CD8-positive, alpha-beta T cell (primary cell): ENCODE measurements at regions of chr9 and their contacts with region 1.

Region 1: DNA sequence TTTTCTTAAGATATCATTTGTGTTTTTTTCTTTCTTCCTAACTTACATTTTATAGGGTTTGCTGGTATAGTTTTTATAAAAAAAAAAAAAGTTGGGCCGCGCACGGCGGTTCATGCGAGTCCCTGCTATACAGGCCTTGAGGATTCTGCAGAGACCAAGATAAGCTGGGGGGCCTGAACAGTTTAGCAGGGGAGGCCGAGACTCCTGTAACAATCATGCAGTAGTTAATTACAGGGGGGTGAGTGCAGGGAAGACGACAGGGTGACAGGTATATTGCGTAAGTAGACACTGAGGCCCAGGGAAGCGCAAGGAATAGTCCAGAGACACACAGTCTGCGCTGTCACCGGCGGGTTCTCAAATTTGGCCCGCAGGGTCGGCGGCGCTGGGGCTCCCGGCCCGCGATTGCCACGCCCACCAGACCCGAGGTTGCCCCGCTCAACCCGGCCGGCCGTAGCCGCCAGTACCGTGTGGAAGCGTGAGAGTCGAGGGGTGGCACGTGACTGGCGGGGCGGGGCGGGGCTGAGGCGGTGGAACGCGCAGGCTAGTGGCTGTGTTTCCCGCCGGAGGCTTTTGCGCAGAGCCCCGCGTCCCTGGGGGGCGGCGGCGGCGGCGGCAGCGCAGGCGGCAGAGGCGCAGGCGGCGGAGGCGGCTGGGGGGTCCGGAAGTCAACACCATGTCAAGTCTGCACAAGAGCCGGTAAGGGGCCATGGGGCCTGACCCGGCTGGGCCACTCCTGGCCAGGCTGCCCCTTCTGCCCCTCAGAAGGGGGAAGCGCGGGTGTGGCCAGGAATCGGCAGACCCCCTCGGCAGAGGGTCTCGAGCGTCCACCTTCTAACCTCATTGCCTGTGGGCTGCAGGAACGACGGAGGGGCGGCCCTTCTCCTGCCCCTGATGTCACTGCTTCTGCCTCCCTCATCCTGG is at the start of gene TBC1D13:
- DNase-seq: peak; percentile 86 to 95 (median 89)
- ATAC-seq: peak; percentile 90
- H3K4me3 ChIP-seq: peak within 1 kb of the TSS; percentile 96 to 98
- H3K4me3 Mint-ChIP-seq: peak within 1 kb of the TSS; percentile 94
- H3K27ac ChIP-seq: peak within 1 kb of the TSS; percentile 82 to 83
- H3K27ac Mint-ChIP-seq: peak within 1 kb of the TSS; percentile 96
- H3K4me1 ChIP-seq: peaks cover 20% of the 10 kb centered on the region
- H3K4me1 Mint-ChIP-seq: peaks cover 23% of the 10 kb centered on the region
- H3K27me3 ChIP-seq: no peaks in the 10 kb centered on the region
- H3K27me3 Mint-ChIP-seq: no peaks in the 10 kb centered on the region
- CTCF ChIP-seq: no peak
- total RNA-seq, gene TBC1D13: 30.7 to 35.0 TPM

Region 2: DNA sequence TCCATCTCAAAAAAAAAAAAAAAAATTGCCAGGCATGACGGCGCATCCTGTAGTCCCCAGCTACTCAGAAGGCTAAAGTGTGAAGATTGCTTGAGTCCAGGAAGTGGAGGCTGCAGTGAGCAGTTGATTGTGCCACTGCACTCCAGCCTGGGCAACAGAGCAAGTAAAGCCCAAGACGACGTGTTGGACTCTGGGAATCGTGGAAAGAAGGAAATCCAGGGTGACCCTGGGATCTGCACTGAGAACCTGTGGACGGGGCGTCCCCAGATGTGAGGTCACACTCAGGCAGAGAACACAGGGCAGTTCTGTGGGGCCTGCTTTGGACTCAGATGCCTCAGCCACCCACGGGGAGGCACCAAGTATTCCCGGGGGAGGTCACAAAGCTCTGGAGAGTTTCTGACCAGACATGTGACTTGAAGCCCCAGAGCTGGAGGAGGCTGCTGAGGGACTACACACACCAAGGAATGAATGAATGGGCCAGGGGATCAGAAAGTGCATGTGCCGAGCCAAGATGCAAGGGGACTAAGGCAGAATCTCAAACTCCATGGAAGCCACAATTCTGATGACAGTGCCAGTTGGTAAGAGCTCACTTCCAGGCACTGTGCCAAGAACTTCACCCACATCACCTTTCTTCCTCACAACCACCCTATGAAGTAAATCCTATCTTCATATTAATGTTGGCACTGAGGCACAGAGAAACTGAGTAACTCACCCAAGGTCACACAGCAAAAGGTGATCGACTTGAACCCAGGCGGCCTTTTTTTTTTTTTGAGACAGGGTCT is 143.2 kb before region 1 on chr9:
- CTCF ChIA-PET with region 1: no interaction called
- POLR2A ChIA-PET with region 1: no interaction called
- intact Hi-C with region 1: loop called in 1 of 2 experiments (anchors 2 kb)
- DNase-seq: no peak
- ATAC-seq: no peak
- H3K4me3 ChIP-seq: no peak overlapping the region
- H3K4me3 Mint-ChIP-seq: no peak overlapping the region
- H3K27ac ChIP-seq: no peak overlapping the region
- H3K27ac Mint-ChIP-seq: no peak overlapping the region
- H3K4me1 ChIP-seq: no peaks in the 10 kb centered on the region
- H3K4me1 Mint-ChIP-seq: no peaks in the 10 kb centered on the region
- H3K27me3 ChIP-seq: no peaks in the 10 kb centered on the region
- H3K27me3 Mint-ChIP-seq: no peaks in the 10 kb centered on the region
- CTCF ChIP-seq: no peak

Region 3: DNA sequence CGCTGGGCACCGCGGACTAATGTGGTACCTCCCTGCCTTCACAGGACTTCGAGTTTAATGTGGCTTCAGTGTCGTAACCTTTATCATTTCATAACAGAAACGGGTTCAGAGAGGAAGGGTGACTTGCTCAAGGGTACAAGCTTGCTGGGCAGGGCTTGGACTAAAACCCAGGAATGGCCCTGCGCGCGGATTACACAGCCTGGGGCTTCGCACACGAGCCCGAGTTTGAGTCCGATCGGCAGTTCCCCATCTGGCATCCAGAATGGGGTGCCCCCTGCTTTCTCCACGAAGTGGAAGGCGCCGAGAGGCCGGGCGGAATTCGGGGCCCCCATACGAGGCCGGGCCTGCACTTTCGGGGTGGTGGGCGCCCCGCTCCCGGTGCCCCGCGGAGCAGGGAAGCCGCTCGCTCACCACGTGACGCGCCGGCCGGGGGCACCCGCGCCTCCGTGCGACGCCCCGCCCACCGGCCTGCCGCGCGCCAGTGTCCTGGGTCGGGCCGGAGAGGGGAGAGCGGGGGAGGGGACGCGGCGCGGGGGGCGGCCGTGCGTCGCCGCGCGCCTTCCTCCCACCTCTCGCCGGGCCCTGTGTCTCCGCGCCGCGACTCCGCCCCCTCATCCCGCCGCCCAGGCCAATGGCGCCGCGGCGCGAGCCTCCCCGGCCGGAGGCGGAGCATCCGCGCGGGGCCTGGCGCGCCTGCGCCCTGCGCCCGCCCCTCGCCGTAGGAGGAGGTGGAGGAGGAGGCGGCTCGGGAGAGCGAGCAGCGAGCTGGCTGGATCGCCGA is 98.2 kb before region 1 on chr9 and contains the start of gene SET:
- CTCF ChIA-PET with region 1: interaction called, 3 read pairs
- POLR2A ChIA-PET with region 1: interaction called, 6 read pairs
- intact Hi-C with region 1: loop called in 1 of 2 experiments (anchors 1 kb)
- DNase-seq: peak; percentile 81 to 97 (median 92)
- ATAC-seq: peak; percentile 78
- H3K4me3 ChIP-seq: peak within 1 kb of the TSS; percentile 68 to 90
- H3K4me3 Mint-ChIP-seq: peak within 1 kb of the TSS; percentile 90
- H3K27ac ChIP-seq: peak within 1 kb of the TSS; percentile 68 to 91
- H3K27ac Mint-ChIP-seq: peak within 1 kb of the TSS; percentile 96
- H3K4me1 ChIP-seq: peaks cover 64% of the 10 kb centered on the region
- H3K4me1 Mint-ChIP-seq: peaks cover 67% of the 10 kb centered on the region
- H3K27me3 ChIP-seq: no peaks in the 10 kb centered on the region
- H3K27me3 Mint-ChIP-seq: no peaks in the 10 kb centered on the region
- CTCF ChIP-seq: no peak
- total RNA-seq, gene SET: 243 to 260 TPM

Region 4: GRCh38 chr9:128723866-128724743 is 62.8 kb before region 1 on chr9 and contains the start of gene ZDHHC12:
- CTCF ChIA-PET with region 1: no interaction called
- POLR2A ChIA-PET with region 1: no interaction called
- intact Hi-C with region 1: loop called in 1 of 2 experiments (anchors 1 kb)
- DNase-seq: peak; percentile 97 to 100 (median 99)
- ATAC-seq: peak; percentile 97
- H3K4me3 ChIP-seq: peak within 1 kb of the TSS; percentile 74 to 84
- H3K4me3 Mint-ChIP-seq: peak within 1 kb of the TSS; percentile 89
- H3K27ac ChIP-seq: peak within 1 kb of the TSS; percentile 69 to 79
- H3K27ac Mint-ChIP-seq: peak within 1 kb of the TSS; percentile 92
- H3K4me1 ChIP-seq: peaks cover 37% of the 10 kb centered on the region
- H3K4me1 Mint-ChIP-seq: peaks cover 29% of the 10 kb centered on the region
- H3K27me3 ChIP-seq: no peaks in the 10 kb centered on the region
- H3K27me3 Mint-ChIP-seq: no peaks in the 10 kb centered on the region
- CTCF ChIP-seq: no peak
- total RNA-seq, gene ZDHHC12: 25.5 to 29.6 TPM

Region 5: GRCh38 chr9:128818099-128818838 is 31.3 kb after region 1 on chr9 and contains the start of gene ENDOG:
- CTCF ChIA-PET with region 1: interaction called, 5 read pairs
- POLR2A ChIA-PET with region 1: interaction called, 18 read pairs
- intact Hi-C with region 1: loop called (anchors 1 kb)
- DNase-seq: peak; percentile 94 to 98 (median 97)
- ATAC-seq: peak; percentile 96
- H3K4me3 ChIP-seq: peak within 1 kb of the TSS; percentile 59 to 75
- H3K4me3 Mint-ChIP-seq: peak within 1 kb of the TSS; percentile 91
- H3K27ac ChIP-seq: peak within 1 kb of the TSS; percentile 52 to 67
- H3K27ac Mint-ChIP-seq: peak within 1 kb of the TSS; percentile 87
- H3K4me1 ChIP-seq: peaks cover 12% of the 10 kb centered on the region
- H3K4me1 Mint-ChIP-seq: peaks cover 21% of the 10 kb centered on the region
- H3K27me3 ChIP-seq: no peaks in the 10 kb centered on the region
- H3K27me3 Mint-ChIP-seq: no peaks in the 10 kb centered on the region
- CTCF ChIP-seq: peak; percentile 98
- total RNA-seq, gene ENDOG: 6.2 to 6.4 TPM

Region 6: GRCh38 chr9:129052592-129052991 is 265.7 kb after region 1 on chr9:
- CTCF ChIA-PET with region 1: no interaction called
- POLR2A ChIA-PET with region 1: no interaction called
- intact Hi-C with region 1: no loop called
- DNase-seq: no peak
- ATAC-seq: no peak
- H3K4me3 ChIP-seq: no peak overlapping the region
- H3K4me3 Mint-ChIP-seq: no peak overlapping the region
- H3K27ac ChIP-seq: no peak overlapping the region
- H3K27ac Mint-ChIP-seq: no peak overlapping the region
- H3K4me1 ChIP-seq: no peaks in the 10 kb centered on the region
- H3K4me1 Mint-ChIP-seq: no peaks in the 10 kb centered on the region
- H3K27me3 ChIP-seq: no peaks in the 10 kb centered on the region
- H3K27me3 Mint-ChIP-seq: no peaks in the 10 kb centered on the region
- CTCF ChIP-seq: no peak